ENCODE measurements at regions of chr18 and their contacts with region 1.

Region 1: GRCh38 chr18:47215554-47216138 is 35.8 kb downstream of the SKOR2 start:
- DNase-seq: peak; percentile 30
- ATAC-seq: peak; percentile 79
- H3K4me3 Mint-ChIP-seq: no peak overlapping the region
- H3K27ac Mint-ChIP-seq: no peak overlapping the region
- H3K4me1 Mint-ChIP-seq: peaks cover 7% of the 10 kb centered on the region
- H3K27me3 Mint-ChIP-seq: no peaks in the 10 kb centered on the region; the same call in 1 of the 2 replicates
- CTCF ChIP-seq: peak; percentile 26; the same call in 1 of the 2 replicates

Region 2: DNA sequence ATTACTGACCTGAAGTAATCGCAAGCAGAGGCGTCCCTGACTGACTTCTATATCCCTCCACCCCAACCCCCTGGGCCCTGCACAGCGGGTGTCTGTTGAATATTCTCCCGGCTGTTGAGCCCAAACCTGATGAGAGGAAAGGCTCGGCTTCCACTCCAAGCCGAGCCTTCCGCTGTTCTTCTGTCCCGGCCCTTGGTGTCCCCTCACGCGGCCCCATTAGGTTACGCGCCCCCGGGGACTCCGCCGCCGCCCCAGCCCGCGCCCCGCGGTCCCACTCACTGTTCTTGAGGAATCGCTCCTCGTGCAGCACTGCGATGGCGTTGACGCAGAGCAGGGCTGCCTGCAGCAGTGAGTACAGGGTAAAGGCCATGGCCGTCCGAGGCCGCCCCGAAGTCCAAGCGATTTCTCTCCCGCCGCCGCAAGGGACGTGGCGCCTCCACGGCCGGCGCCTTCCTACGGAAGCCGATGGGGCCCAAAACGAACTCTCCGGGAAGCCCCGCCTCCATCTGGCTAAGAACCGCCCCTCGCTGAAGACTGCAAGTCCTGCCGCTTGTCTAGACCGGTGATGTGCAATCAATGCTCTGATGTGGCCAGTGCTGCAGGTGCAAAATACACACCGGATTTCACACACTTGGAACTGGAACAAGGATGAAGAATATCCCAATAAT is 39.6 kb before region 1 on chr18 and contains the start of gene IER3IP1:
- CTCF ChIA-PET with region 1: no interaction called
- POLR2A ChIA-PET with region 1: no interaction called
- DNase-seq: peak; percentile 90
- ATAC-seq: peak; percentile 87
- H3K4me3 Mint-ChIP-seq: no peak within 1 kb of the TSS
- H3K27ac Mint-ChIP-seq: 0 out of 2 replicates have a peak within 1 kb of the TSS, but pooled peaks have one; percentile 60
- H3K4me1 Mint-ChIP-seq: peaks cover 5% of the 10 kb centered on the region
- H3K27me3 Mint-ChIP-seq: peaks cover 11% of the 10 kb centered on the region; the same call in 1 of the 2 replicates
- CTCF ChIP-seq: no peak
- total RNA-seq, gene IER3IP1: 6.7 to 7.7 TPM (median 7.3 TPM) in 3 replicates

Region 3: DNA sequence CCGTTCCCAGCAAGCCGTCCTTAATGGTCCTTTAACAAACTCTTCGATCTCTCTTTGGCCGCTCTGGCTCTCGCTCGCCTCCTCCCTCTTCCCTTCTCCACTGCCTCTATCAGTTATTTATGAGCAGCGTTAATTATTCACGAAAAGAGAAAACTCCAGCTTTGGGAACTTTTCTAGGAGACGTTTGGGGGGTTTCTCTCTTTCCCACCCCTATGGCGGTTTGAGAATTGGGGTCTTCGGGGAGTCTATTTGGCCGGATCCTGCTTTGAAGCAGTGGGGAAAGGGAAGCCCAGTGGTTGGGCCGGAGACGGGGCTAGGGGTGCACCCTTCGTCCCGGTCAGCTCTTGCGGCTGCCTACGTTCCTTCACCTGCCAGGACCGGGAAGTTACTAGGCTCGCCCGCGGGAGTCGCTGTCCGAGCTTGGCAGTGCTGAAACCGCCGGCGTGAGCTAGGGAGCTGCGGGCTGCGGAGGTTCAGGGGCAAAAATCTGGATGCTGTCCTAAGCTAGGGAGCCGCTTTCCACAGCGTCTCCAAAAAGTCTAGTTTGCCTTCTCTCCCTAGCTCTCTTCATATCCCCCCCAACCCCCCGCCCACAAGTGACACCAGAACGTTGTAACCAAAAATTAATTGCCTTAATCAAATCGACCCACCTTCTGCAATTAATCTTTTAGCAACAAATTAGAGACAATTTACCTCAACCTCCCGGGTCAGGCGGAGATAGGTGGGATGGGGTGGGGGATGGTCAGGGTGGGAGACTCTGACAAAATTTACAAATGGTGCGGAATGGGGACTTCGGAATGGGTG is 44.7 kb after region 1 on chr18:
- CTCF ChIA-PET with region 1: interaction called, 18 read pairs
- POLR2A ChIA-PET with region 1: no interaction called
- DNase-seq: peak; percentile 93
- ATAC-seq: peak; percentile 40
- H3K4me3 Mint-ChIP-seq: peak overlapping the region; percentile 54
- H3K27ac Mint-ChIP-seq: no peak overlapping the region
- H3K4me1 Mint-ChIP-seq: peaks cover 48% of the 10 kb centered on the region
- H3K27me3 Mint-ChIP-seq: peaks cover 100% of the 10 kb centered on the region
- CTCF ChIP-seq: no peak

Region 4: DNA sequence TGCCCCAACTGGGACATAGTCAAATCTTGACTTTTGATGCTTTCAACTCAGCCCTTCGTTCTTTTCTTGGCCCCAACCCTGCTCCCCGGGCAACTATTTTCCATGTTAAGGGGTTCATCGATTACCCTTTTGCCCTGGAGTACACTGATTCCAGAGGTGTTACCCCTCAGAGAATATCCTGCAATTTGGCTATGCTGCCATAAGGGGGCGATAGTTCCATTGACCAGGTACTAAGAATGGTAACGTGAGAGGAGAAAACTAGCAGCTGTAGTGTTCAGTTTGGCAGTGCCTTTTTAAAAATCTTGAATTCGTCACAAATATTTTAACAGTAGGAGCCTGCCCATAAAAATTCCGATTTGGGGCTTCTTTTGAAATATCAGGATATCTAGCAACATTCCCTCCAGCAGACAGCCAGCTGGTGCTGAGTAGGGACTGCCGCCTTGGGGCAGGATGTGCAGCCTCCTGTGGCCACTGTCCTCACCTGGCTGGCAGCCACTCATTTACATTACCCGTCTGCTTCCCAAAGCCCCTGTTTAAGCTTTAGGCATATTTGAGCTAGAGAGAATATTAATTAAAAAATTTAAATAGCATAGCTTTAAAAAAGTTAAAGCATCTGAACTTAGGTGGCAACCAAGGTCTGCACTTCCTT is 182.1 kb after region 1 on chr18:
- CTCF ChIA-PET with region 1: interaction called, 12 read pairs
- POLR2A ChIA-PET with region 1: no interaction called
- DNase-seq: peak; percentile 73
- ATAC-seq: peak; percentile 87
- H3K4me3 Mint-ChIP-seq: no peak overlapping the region
- H3K27ac Mint-ChIP-seq: no peak overlapping the region
- H3K4me1 Mint-ChIP-seq: no peaks in the 10 kb centered on the region
- H3K27me3 Mint-ChIP-seq: peaks cover under 1% of the 10 kb centered on the region; the same call in 1 of the 2 replicates
- CTCF ChIP-seq: peak; percentile 74

Region 5: GRCh38 chr18:47748847-47749599 is 533.4 kb after region 1 on chr18:
- CTCF ChIA-PET with region 1: interaction called, 11 read pairs
- POLR2A ChIA-PET with region 1: no interaction called
- DNase-seq: peak; percentile 83
- ATAC-seq: peak; percentile 81
- H3K4me3 Mint-ChIP-seq: peak overlapping the region; percentile 65
- H3K27ac Mint-ChIP-seq: no peak overlapping the region
- H3K4me1 Mint-ChIP-seq: peaks cover 9% of the 10 kb centered on the region; the same call in 1 of the 2 replicates
- H3K27me3 Mint-ChIP-seq: peaks cover 17% of the 10 kb centered on the region
- CTCF ChIP-seq: peak; percentile 100

Region 6: GRCh38 chr18:47756364-47757016 is 540.8 kb after region 1 on chr18:
- CTCF ChIA-PET with region 1: interaction called, 11 read pairs
- POLR2A ChIA-PET with region 1: interaction called, 4 read pairs
- DNase-seq: peak; percentile 83
- ATAC-seq: peak; percentile 67
- H3K4me3 Mint-ChIP-seq: no peak overlapping the region
- H3K27ac Mint-ChIP-seq: no peak overlapping the region
- H3K4me1 Mint-ChIP-seq: peaks cover 9% of the 10 kb centered on the region; the same call in 1 of the 2 replicates
- H3K27me3 Mint-ChIP-seq: no peaks in the 10 kb centered on the region; the same call in 1 of the 2 replicates
- CTCF ChIP-seq: peak; percentile 90

Measured in WTC11 (cell line).